ENCODE measurements at regions of chr17 and their contacts with region 1.

Region 1: DNA sequence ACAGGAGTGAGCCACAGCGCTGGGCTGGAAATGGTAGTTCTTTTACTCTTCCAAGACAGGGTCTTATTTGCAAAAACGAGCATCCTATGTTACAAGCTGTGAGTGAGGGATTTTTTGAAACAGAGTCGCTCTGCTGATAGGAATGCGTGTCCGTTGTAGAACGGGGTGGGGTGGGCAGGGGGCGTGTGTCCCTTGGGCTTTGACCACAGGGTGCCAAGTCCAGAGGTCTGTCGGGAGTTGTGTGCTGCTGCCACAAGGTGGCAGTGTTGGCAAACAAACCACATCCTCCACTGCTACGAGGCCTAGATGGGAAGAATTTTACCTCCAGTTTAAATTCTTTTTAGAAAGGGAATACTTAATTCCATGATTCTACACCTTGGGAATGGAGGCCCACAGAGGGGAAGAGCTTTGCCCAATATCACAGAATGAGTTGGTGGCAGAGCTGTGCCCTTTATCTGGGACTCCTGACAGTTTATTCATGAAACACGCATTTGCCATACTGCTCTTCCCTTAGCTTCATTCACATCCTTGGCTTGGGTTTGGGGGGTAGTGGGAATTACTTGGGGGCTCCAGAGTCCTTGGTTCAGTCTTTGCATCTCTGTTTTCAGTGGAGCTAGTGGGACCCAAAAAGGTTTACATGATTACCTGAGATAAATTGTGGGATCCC is 30.6 kb upstream of the ETV4 start:
- DNase-seq: peak; percentile 49
- ATAC-seq: peak; percentile 66
- H3K4me3 ChIP-seq: no peak overlapping the region
- H3K27ac ChIP-seq: no peak overlapping the region
- H3K4me1 ChIP-seq: peaks cover 18% of the 10 kb centered on the region
- H3K27me3 ChIP-seq: no peaks in the 10 kb centered on the region
- CTCF ChIP-seq: peak; percentile 81 to 85 (median 82)
- EP300 ChIP-seq: no peak
- POLR2A ChIP-seq: no peak
- RAD21 ChIP-seq: peak; percentile 92

Region 2: DNA sequence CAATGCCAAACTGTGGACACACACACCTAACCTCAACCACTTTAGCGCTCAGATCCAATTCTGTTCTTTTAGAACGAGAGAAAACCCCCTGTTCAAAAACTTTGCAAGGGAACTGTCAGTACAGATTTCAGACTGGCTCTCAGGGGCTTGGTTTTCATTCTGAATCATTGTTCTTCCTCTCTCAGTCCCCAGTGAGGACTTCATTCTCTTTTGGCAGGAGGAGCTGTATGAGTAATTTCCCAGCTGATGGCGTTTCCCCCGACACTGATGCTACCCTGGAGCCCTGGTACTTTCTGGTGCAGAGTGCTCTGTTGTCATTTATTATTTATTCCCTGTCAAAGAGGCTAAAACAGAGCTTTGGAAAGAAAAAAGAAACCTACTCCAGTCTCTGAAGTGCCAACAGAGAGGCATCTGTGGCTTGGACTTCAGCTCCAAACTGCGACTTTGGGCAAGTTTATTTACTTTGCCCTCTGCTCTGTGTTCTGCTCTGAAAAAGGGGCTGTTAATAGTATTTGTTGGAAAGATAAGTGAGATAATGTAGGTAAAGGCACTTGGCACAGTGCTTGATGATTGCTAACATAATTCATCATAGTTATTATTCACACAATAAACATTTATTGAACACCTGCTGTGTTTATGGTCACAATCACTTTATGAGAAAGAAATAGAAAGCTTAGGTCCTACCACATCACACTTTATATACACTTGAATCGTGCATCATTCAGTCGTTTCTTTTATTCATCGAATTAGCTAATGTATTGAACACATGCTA is 58.9 kb before region 1 on chr17:
- CTCF ChIA-PET with region 1: interaction called, 108 read pairs
- POLR2A ChIA-PET with region 1: interaction called, 5 read pairs
- RAD21 ChIA-PET with region 1: interaction called, 47 read pairs
- SMC1A ChIA-PET with region 1: interaction called, 118 read pairs
- in situ Hi-C with region 1: no loop called
- intact Hi-C with region 1: loop called (anchors 5 kb)
- DNase-seq: peak; percentile 82
- ATAC-seq: peak; percentile 93
- H3K4me3 ChIP-seq: no peak overlapping the region
- H3K27ac ChIP-seq: peak overlapping the region; percentile 91
- H3K4me1 ChIP-seq: peaks cover 20% of the 10 kb centered on the region
- H3K27me3 ChIP-seq: no peaks in the 10 kb centered on the region
- CTCF ChIP-seq: no peak
- EP300 ChIP-seq: no peak
- POLR2A ChIP-seq: no peak
- RAD21 ChIP-seq: no peak

Region 3: GRCh38 chr17:43546319-43547188 is 30.1 kb before region 1 on chr17 and contains the start of gene ETV4:
- CTCF ChIA-PET with region 1: interaction called, 6 read pairs
- POLR2A ChIA-PET with region 1: interaction called, 3 read pairs
- RAD21 ChIA-PET with region 1: interaction called, 20 read pairs
- SMC1A ChIA-PET with region 1: interaction called, 14 read pairs
- in situ Hi-C with region 1: no loop called
- intact Hi-C with region 1: no loop called
- DNase-seq: peak; percentile 55
- ATAC-seq: peak; percentile 93
- H3K4me3 ChIP-seq: peak within 1 kb of the TSS; percentile 74
- H3K27ac ChIP-seq: no peak within 1 kb of the TSS
- H3K4me1 ChIP-seq: peaks cover 3% of the 10 kb centered on the region; the same call in 1 of the 2 replicates
- H3K27me3 ChIP-seq: peaks cover 0 to 4% of the 10 kb centered on the region in 2 experiments; a peak in 2 of 4 replicates
- CTCF ChIP-seq: no peak
- EP300 ChIP-seq: no peak
- POLR2A ChIP-seq: no peak; the same call in 1 of the 2 replicates
- RAD21 ChIP-seq: no peak
- polyA plus RNA-seq, gene ETV4: 0.19 to 0.49 TPM

Region 4: DNA sequence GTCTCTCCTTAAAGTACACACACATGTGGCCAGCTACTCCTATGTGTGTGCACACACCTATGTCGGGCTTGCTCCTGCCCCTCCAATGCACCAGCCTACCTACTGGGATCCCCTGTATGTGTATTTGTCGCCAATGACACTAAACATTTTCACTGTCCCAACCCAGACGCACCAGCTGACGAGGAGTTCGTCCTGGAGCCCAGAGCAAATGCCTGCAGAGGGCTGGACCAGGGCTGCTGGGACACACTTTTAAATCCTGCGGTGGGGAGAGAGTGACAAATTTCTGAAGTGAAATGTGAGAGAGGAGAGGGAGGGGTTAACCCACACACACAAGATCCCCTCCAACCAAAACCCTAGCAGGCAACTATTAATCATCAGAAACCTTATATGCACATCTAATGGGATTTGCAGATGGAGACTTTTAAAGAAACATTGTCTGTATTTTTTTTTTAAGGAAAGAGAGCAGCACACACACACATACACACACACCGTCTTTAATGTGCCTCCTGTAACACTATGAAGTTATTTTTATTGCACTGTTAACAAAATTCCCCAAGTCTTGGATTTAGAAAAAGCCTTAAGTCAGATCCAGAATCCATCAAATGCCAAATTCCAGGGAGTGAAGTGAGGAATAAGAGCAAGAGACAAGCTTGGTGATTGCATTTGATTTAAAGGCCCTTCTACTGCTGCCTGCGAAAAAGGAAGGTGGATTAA is 85.2 kb after region 1 on chr17 and contains the start of gene MEOX1:
- CTCF ChIA-PET with region 1: interaction called, 38 read pairs
- POLR2A ChIA-PET with region 1: interaction called, 5 read pairs
- RAD21 ChIA-PET with region 1: interaction called, 77 read pairs
- SMC1A ChIA-PET with region 1: interaction called, 98 read pairs
- in situ Hi-C with region 1: no loop called
- intact Hi-C with region 1: no loop called
- DNase-seq: peak; percentile 79
- ATAC-seq: peak; percentile 89
- H3K4me3 ChIP-seq: peak within 1 kb of the TSS; percentile 69
- H3K27ac ChIP-seq: peak within 1 kb of the TSS; percentile 71
- H3K4me1 ChIP-seq: peaks cover 16% of the 10 kb centered on the region
- H3K27me3 ChIP-seq: no peaks in the 10 kb centered on the region
- CTCF ChIP-seq: no peak
- EP300 ChIP-seq: peak in 1 of 2 experiments; percentile 33; a peak in 1 of 4 replicates
- POLR2A ChIP-seq: no peak
- RAD21 ChIP-seq: no peak
- polyA plus RNA-seq, gene MEOX1: 0.19 to 0.24 TPM

Region 5: DNA sequence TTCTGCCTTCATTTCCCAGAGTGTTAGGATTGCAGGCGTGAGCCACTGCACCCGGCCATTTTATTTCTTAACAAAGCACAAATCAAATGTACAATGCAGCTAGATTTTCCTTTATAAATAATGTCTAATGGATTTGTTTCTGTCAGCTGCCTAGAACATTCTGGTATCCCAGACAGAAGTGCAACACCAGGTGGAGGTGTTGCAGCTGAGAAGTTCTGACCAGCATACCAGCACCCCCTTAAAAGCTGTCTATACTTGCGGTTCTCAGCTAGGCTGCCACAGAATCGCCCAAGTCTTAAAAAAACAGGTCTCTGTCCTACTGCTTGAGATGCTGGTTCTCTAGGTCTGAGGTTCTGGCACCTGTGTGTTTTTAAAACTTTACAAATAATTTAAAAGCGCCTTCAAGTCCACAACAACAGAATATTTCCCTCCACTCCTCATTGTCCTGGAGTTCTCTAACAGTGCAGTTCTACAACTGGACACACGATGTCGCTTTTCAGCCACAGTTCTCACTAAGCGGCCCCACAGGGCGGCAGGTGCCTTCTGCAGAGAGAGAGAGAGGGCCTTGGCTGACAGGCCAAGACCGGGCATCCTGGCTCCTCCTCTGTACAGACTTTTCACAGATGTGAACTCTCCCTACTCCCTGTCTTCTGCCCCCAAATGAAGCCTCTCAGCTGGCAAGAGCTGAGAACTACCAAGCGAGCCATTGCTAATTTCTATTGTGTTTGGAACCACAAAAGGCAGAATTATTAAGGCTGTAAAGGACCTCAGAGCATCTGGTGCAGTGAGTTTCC is 117.6 kb after region 1 on chr17:
- CTCF ChIA-PET with region 1: interaction called, 61 read pairs
- POLR2A ChIA-PET with region 1: interaction called, 3 read pairs
- RAD21 ChIA-PET with region 1: interaction called, 31 read pairs
- SMC1A ChIA-PET with region 1: interaction called, 67 read pairs
- in situ Hi-C with region 1: no loop called
- intact Hi-C with region 1: no loop called
- DNase-seq: no peak
- ATAC-seq: peak; percentile 92
- H3K4me3 ChIP-seq: no peak overlapping the region
- H3K27ac ChIP-seq: no peak overlapping the region
- H3K4me1 ChIP-seq: no peaks in the 10 kb centered on the region
- H3K27me3 ChIP-seq: peaks cover 0 to 2% of the 10 kb centered on the region in 2 experiments; a peak in 1 of 4 replicates
- CTCF ChIP-seq: peak; percentile 84 to 98 (median 92); a peak in 5 of 6 replicates
- EP300 ChIP-seq: no peak
- POLR2A ChIP-seq: no peak
- RAD21 ChIP-seq: peak; percentile 99